ENCODE measurements at regions of chr10 and their contacts with region 1.

Region 1: GRCh38 chr10:42638055-42638820 is at the start of gene ZNF33B:
- DNase-seq: peak; percentile 98
- H3K4me3 Mint-ChIP-seq: peak within 1 kb of the TSS; percentile 90
- H3K27ac Mint-ChIP-seq: peak within 1 kb of the TSS; percentile 99
- H3K4me1 Mint-ChIP-seq: peaks cover 26% of the 10 kb centered on the region
- H3K27me3 Mint-ChIP-seq: no peaks in the 10 kb centered on the region
- total RNA-seq, gene ZNF33B: 7.1 and 7.8 TPM in 2 replicates

Region 2: GRCh38 chr10:42782446-42783180 is 144.4 kb after region 1 on chr10 and contains the start of gene BMS1:
- intact Hi-C with region 1: loop called (anchors 1 kb)
- DNase-seq: peak; percentile 97
- H3K4me3 Mint-ChIP-seq: peak within 1 kb of the TSS; percentile 93
- H3K27ac Mint-ChIP-seq: peak within 1 kb of the TSS; percentile 96
- H3K4me1 Mint-ChIP-seq: peaks cover 18% of the 10 kb centered on the region
- H3K27me3 Mint-ChIP-seq: peaks cover 5% of the 10 kb centered on the region
- total RNA-seq, gene BMS1: 38.4 and 39.3 TPM in 2 replicates

Region 3: DNA sequence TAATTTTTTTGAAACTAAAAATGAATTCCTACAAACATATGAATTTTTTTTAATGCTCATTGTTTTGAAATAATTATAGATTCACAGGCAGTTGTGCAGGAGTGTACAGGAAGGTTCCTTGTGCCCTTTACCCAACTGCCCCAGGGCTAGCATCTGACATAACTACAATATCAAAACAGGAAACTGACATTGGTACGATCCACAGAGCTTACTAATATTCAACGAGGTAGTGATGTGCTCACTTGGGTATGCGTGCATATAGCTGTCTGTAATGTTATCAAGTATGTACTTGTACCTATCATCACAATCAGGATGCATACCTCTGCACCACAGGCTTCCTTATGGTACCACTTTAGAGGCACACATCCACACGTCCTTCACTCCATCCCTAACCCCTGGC is 212.7 kb after region 1 on chr10:
- intact Hi-C with region 1: no loop called
- DNase-seq: no peak
- H3K4me3 Mint-ChIP-seq: no peak overlapping the region
- H3K27ac Mint-ChIP-seq: no peak overlapping the region
- H3K4me1 Mint-ChIP-seq: no peaks in the 10 kb centered on the region
- H3K27me3 Mint-ChIP-seq: peaks cover 22% of the 10 kb centered on the region

Region 4: GRCh38 chr10:43120929-43121314 is 482.7 kb after region 1 on chr10:
- intact Hi-C with region 1: loop called (anchors 2 kb)
- DNase-seq: peak; percentile 93
- H3K4me3 Mint-ChIP-seq: peak overlapping the region; percentile 75
- H3K27ac Mint-ChIP-seq: peak overlapping the region; percentile 96
- H3K4me1 Mint-ChIP-seq: peaks cover 44% of the 10 kb centered on the region
- H3K27me3 Mint-ChIP-seq: no peaks in the 10 kb centered on the region

Region 5: GRCh38 chr10:43594944-43595589 is 956.8 kb after region 1 on chr10:
- intact Hi-C with region 1: loop called (anchors 10 kb)
- DNase-seq: peak; percentile 84
- H3K4me3 Mint-ChIP-seq: peak overlapping the region; percentile 69
- H3K27ac Mint-ChIP-seq: peak overlapping the region; percentile 85
- H3K4me1 Mint-ChIP-seq: peaks cover 24% of the 10 kb centered on the region
- H3K27me3 Mint-ChIP-seq: peaks cover 10% of the 10 kb centered on the region

Measured in activated CD4-positive, alpha-beta T cell treated with anti-CD3 and anti-CD28 coated beads, Interleukin-2, amount 10 ng/mL, durations not matched to agents 24 days and 14 days (primary cell).